Activated B cell treated with CpG ODN at 0.5 μM for 24 hours (primary cell): ENCODE measurements at regions of chr11 and their contacts with region 1.

Region 1: GRCh38 chr11:65382033-65382807 is at the start of gene SLC25A45:
- DNase-seq: peak; percentile 84
- ATAC-seq: peak; percentile 84
- H3K4me3 Mint-ChIP-seq: peak within 1 kb of the TSS; percentile 82
- H3K27ac Mint-ChIP-seq: peak within 1 kb of the TSS; percentile 94
- H3K4me1 Mint-ChIP-seq: peaks cover 67% of the 10 kb centered on the region
- H3K27me3 Mint-ChIP-seq: no peaks in the 10 kb centered on the region
- CTCF ChIP-seq: no peak
- total RNA-seq, gene SLC25A45: 11.4 and 12.3 TPM in 2 replicates

Region 2: GRCh38 chr11:65314501-65315203 is 67.6 kb before region 1 on chr11 and contains the start of gene CDC42EP2:
- CTCF ChIA-PET with region 1: no interaction called
- POLR2A ChIA-PET with region 1: no interaction called
- intact Hi-C with region 1: no loop called
- DNase-seq: peak; percentile 79
- ATAC-seq: peak; percentile 95
- H3K4me3 Mint-ChIP-seq: peak within 1 kb of the TSS; percentile 83
- H3K27ac Mint-ChIP-seq: no peak within 1 kb of the TSS
- H3K4me1 Mint-ChIP-seq: peaks cover 5% of the 10 kb centered on the region
- H3K27me3 Mint-ChIP-seq: peaks cover 8% of the 10 kb centered on the region
- CTCF ChIP-seq: no peak
- total RNA-seq, gene CDC42EP2: 0.18 and 0.83 TPM in 2 replicates

Region 3: GRCh38 chr11:65329944-65330403 is 52.2 kb before region 1 on chr11:
- CTCF ChIA-PET with region 1: interaction called, 4 read pairs
- POLR2A ChIA-PET with region 1: interaction called, 10 read pairs
- intact Hi-C with region 1: no loop called
- DNase-seq: peak; percentile 56
- ATAC-seq: peak; percentile 43
- H3K4me3 Mint-ChIP-seq: peak overlapping the region; percentile 78
- H3K27ac Mint-ChIP-seq: peak overlapping the region; percentile 96
- H3K4me1 Mint-ChIP-seq: peaks cover 24% of the 10 kb centered on the region
- H3K27me3 Mint-ChIP-seq: no peaks in the 10 kb centered on the region
- CTCF ChIP-seq: no peak

Region 4: DNA sequence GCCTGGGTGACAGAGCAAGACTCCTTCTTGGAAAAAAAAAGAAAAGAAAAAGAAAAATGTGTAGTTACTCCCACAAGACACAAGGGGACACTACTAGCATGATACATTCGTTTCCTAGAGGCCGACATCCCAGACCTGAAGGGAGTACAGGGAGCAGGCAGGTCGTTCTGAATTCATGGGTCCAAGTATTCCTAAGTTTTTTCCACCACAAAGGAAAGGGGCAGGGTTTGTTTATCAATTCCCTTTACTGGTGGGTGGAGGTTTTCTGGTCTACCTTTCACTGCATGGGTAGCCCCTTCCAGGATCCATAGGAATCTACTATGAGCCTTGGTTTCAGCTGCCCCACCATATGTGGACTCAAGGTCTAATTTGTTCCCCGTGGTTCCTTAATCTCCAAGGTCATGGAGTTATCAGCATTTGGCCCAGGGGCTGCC is 15.9 kb before region 1 on chr11:
- CTCF ChIA-PET with region 1: interaction called, 7 read pairs
- POLR2A ChIA-PET with region 1: interaction called, 10 read pairs
- intact Hi-C with region 1: loop called (anchors 1 kb)
- DNase-seq: no peak
- ATAC-seq: peak; percentile 72
- H3K4me3 Mint-ChIP-seq: no peak overlapping the region
- H3K27ac Mint-ChIP-seq: no peak overlapping the region
- H3K4me1 Mint-ChIP-seq: peaks cover 25% of the 10 kb centered on the region
- H3K27me3 Mint-ChIP-seq: no peaks in the 10 kb centered on the region
- CTCF ChIP-seq: peak; percentile 60

Region 5: GRCh38 chr11:65418711-65419459 is 36.7 kb after region 1 on chr11:
- CTCF ChIA-PET with region 1: interaction called, 6 read pairs
- POLR2A ChIA-PET with region 1: interaction called, 457 read pairs
- intact Hi-C with region 1: loop called (anchors 1 kb)
- DNase-seq: peak; percentile 87
- ATAC-seq: peak; percentile 50
- H3K4me3 Mint-ChIP-seq: peak overlapping the region; percentile 87
- H3K27ac Mint-ChIP-seq: peak overlapping the region; percentile 100
- H3K4me1 Mint-ChIP-seq: peaks cover 71% of the 10 kb centered on the region
- H3K27me3 Mint-ChIP-seq: no peaks in the 10 kb centered on the region
- CTCF ChIP-seq: no peak

Region 6: DNA sequence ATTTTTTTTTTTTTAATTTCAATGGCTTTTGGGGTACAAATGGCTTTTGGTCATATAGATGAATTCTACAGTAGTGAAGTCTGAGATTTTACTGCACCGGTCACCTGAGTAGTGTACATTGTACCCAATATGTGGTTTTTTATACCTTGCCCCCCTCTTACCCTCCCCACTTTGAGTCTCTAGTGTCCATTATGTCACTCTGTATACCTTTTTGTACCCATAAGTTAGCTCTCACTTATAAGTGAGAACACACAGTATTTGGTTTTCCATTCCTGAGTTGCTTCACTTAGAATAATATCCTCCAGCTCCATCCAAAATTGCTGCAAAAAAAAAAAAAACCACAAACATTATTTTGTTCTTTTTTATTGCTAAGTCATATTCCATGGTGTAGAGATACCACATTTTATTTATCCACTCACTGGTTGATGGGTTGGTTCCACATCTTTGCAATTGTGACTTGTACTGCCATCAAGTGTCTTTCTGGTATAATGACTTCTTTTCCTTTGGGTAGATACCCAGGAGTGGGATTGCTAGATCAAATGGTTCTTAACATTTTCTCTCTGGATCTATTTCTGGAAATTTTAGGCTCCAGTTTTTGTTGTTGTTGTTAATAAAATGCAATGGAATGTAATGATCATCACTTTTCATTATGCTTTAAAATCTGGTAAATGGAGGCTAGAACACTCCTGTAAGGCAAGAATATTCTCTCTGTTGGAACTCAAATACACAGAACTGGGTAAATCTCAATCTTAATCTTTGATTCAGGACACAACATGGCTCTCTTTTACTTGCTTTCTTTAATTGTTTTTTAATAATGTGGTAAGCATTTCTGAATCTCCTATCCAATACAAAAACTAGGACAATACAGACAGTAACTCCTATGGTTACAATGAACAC is 50.7 kb after region 1 on chr11:
- CTCF ChIA-PET with region 1: interaction called, 7 read pairs
- POLR2A ChIA-PET with region 1: interaction called, 8 read pairs
- intact Hi-C with region 1: loop called (anchors 1 kb)
- DNase-seq: no peak
- ATAC-seq: peak; percentile 30
- H3K4me3 Mint-ChIP-seq: no peak overlapping the region
- H3K27ac Mint-ChIP-seq: peak overlapping the region; percentile 73
- H3K4me1 Mint-ChIP-seq: peaks cover 64% of the 10 kb centered on the region
- H3K27me3 Mint-ChIP-seq: no peaks in the 10 kb centered on the region
- CTCF ChIP-seq: no peak

Region 7: DNA sequence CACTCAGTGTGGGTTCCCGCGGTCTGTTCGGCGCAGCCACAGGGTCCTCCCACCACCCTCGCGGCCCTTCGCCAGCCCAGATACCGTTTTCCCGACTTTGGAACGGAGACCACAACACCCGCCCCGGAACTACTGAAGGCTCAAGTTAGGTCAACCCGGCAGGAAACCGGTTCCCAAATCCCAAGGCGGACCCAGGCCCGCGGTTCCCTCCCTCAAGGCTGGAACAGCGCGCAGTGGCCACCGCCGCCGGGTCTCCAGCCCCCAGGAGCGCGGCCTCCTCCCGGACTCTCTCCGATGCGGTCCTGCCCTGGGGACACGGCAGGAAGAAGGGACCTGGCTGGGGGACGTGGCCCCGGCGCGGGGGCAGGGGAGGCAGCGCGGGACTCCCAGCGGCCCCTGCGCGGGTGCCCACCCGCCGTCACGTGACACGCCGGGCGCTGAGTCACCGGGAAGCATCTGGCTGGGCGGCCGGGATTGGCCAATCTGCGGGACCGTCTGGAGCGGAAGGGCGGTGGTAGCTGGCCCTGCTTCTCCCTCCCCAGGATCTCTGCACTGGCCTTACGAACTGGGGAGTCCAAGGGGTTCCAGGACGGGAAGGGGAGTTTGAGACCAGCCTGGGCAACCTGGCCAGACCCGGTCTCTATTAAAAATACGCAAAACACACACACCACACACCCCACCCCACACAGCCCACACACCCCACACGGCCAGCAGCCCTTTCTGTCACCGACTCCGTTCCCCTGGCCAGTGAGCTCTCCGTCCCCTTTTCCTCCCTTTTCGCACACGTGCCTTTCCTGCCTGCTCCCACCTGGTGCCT is 95.1 kb after region 1 on chr11:
- CTCF ChIA-PET with region 1: interaction called, 3 read pairs
- POLR2A ChIA-PET with region 1: interaction called, 18 read pairs
- intact Hi-C with region 1: loop called (anchors 1 kb)
- DNase-seq: peak; percentile 92
- ATAC-seq: peak; percentile 86
- H3K4me3 Mint-ChIP-seq: peak overlapping the region; percentile 96
- H3K27ac Mint-ChIP-seq: peak overlapping the region; percentile 99
- H3K4me1 Mint-ChIP-seq: peaks cover 24% of the 10 kb centered on the region
- H3K27me3 Mint-ChIP-seq: no peaks in the 10 kb centered on the region
- CTCF ChIP-seq: no peak

Region 8: GRCh38 chr11:65588199-65589054 is 206.2 kb after region 1 on chr11:
- CTCF ChIA-PET with region 1: interaction called, 5 read pairs
- POLR2A ChIA-PET with region 1: no interaction called
- intact Hi-C with region 1: loop called (anchors 5 kb)
- DNase-seq: peak; percentile 76
- ATAC-seq: peak; percentile 80
- H3K4me3 Mint-ChIP-seq: peak overlapping the region; percentile 70
- H3K27ac Mint-ChIP-seq: peak overlapping the region; percentile 96
- H3K4me1 Mint-ChIP-seq: peaks cover 44% of the 10 kb centered on the region
- H3K27me3 Mint-ChIP-seq: no peaks in the 10 kb centered on the region
- CTCF ChIP-seq: peak; percentile 38

Region 9: DNA sequence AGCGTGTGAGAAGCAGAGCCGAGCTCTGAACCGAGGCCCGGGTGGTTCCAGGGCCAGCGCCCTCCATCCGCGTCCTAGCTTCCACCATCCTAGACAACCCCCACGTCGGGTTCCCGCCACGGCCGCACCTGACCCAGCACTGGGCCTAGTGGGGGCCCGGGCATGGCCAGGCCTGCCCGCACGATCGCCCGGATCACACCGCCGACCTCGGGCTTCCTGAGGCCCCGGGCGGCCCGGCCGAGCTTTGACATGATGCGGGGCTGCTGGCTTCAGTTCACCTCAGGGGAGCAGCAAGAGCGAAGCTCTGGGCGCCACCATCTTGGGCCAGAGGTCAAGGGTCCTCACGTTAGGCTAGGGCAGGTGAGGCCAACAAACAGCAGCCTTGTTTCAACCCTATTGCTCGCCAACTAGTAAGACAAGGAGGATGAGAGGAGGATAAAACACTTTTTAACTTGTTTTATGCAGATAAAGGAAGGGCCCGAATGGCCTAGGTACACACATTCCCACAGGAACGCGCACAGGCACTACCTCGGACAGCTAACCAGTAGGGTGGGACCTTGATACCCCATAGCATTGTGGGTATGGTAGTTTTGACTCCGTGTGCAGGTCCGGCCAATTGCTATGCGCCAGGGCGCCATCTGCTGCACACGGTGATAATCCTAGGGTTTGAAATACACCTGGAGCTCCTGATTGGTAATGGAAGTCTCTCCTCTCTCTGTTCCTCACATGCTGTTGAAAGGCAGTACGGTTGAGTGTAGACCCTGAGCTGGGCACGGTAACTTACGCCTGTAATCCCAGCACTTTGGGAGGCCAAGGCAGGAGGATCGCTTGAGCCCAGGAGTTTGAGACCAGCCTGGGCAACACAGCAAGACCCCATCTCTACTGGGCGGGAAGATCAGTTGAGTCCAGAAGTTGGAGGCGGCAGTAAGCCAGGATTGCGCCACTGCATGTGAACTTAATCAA is 1056.6 kb after region 1 on chr11 and contains the start of gene MRPL11:
- CTCF ChIA-PET with region 1: no interaction called
- POLR2A ChIA-PET with region 1: no interaction called
- intact Hi-C with region 1: no loop called
- DNase-seq: peak; percentile 78
- ATAC-seq: peak; percentile 98
- H3K4me3 Mint-ChIP-seq: peak within 1 kb of the TSS; percentile 87
- H3K27ac Mint-ChIP-seq: peak within 1 kb of the TSS; percentile 97
- H3K4me1 Mint-ChIP-seq: peaks cover 8% of the 10 kb centered on the region
- H3K27me3 Mint-ChIP-seq: peaks cover 4% of the 10 kb centered on the region
- CTCF ChIP-seq: no peak
- total RNA-seq, gene MRPL11: 62.6 and 74.3 TPM in 2 replicates